ENCODE measurements at regions of chr6 and their contacts with region 1.

Region 1: GRCh38 chr6:106360410-106360988 is at the start of gene CRYBG1:
- DNase-seq: peak; percentile 77 to 99
- H3K4me3 ChIP-seq: peak within 1 kb of the TSS; percentile 55 to 81 (median 72)
- H3K27ac ChIP-seq: no peak within 1 kb of the TSS
- H3K4me1 ChIP-seq: peaks cover 0 to 2% (median 0%) of the 10 kb centered on the region in 4 experiments; a peak in 1 of 7 replicates
- H3K27me3 ChIP-seq: peaks cover 0 to 10% (median 7%) of the 10 kb centered on the region in 4 experiments; a peak in 5 of 7 replicates
- CTCF ChIP-seq: peak; percentile 71 to 98 (median 94)
- EP300 ChIP-seq: peak in 1 of 2 experiments; percentile 80; a peak in 2 of 3 replicates
- POLR2A ChIP-seq: peak in 1 of 2 experiments; percentile 33; a peak in 2 of 3 replicates
- RAD21 ChIP-seq: peak; percentile 56 to 74
- total RNA-seq, gene CRYBG1: 11.6 and 11.9 TPM in 2 replicates

Region 2: DNA sequence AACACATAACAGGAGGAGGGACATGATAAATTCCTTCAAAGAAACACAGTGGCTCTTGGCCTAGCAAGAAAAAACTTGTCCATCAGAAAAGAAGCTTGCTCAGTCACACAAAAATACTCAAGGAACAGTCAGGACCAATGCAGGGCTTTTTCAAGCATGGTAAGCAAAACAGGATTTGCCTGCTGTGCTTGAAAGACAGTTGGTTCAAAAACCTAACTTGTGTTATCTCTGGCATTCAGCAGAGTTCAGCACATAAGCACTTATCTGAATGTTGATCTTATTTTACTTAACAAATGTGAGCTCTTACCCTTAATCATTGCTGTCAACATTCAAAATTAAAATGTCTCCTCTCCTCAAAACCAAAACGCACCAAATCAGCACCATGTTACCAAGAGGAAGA is 73.3 kb before region 1 on chr6:
- CTCF ChIA-PET with region 1: no interaction called
- POLR2A ChIA-PET with region 1: no interaction called
- DNase-seq: no peak
- H3K4me3 ChIP-seq: no peak overlapping the region
- H3K27ac ChIP-seq: no peak overlapping the region
- H3K4me1 ChIP-seq: no peaks in the 10 kb centered on the region; a peak in 1 of 7 replicates
- H3K27me3 ChIP-seq: no peaks in the 10 kb centered on the region
- CTCF ChIP-seq: no peak
- EP300 ChIP-seq: no peak
- POLR2A ChIP-seq: no peak
- RAD21 ChIP-seq: no peak

Region 3: DNA sequence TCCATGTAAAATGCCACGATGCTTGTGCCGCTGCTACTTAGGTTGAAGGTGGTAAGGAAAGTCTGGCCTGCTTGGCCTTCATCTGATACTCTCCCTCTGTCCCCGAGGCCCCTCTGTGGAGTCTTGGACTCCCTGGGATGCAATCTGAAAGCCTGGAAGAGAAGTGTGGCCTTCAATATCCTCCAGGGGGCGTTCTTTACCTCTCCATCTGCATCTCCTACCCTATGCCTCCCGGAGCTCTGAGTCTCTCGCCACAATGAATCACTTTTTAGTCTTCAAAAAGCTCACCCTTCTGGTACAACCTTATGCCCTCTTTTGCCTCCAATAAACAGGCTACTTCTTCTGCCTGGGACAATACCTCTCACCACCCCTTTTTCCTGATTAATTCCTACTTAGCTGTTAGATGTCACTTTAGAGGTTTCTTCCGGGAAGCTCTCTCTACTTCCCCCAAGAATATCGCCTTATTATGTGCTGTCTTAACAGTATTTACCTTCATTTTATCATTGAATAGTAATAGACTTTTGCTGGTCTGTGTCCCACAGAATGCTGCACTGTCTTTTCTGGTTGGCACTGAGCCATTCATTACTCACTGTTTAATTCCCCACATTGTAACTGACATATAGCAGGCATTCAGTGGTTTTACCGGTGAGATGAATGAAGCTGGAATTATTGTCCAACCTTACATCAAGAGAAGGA is 21.0 kb before region 1 on chr6:
- CTCF ChIA-PET with region 1: interaction called, 24 read pairs
- POLR2A ChIA-PET with region 1: no interaction called
- DNase-seq: peak; percentile 31 to 72
- H3K4me3 ChIP-seq: no peak overlapping the region
- H3K27ac ChIP-seq: no peak overlapping the region
- H3K4me1 ChIP-seq: no peaks in the 10 kb centered on the region
- H3K27me3 ChIP-seq: no peaks in the 10 kb centered on the region
- CTCF ChIP-seq: peak; percentile 55 to 81 (median 76)
- EP300 ChIP-seq: no peak
- POLR2A ChIP-seq: no peak
- RAD21 ChIP-seq: peak; percentile 82 to 85

Region 4: DNA sequence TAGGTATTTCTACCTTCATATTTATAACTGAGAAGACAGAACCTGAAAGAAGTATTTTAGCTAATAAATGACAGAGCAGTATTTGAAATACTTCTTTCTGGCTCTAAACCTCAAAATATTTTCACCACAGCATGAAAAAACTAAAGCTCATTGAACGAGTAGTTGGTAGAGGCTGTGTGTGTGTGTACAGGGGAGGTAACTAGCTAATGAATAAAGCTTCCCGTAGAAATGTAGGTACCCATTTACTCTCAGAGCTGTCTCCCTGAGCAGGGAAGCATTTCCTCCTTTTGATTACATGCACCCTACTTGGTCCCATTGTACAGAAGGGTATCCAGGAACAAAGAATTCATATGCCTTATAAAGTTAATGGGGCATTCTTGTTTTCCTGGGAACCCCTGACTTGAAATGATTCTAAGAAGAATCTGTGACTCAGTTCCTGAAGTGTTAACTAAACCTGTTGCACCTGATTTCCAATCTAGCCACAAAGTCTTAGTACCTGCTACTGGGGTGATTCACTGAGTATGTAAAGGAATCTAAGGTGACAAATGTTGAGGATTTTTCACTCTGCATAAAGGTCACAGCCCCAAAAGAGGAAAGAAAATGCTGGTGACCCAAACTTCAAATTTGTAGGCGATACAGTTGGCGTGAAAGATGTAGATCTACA is 12.5 kb after region 1 on chr6:
- CTCF ChIA-PET with region 1: interaction called, 24 read pairs
- POLR2A ChIA-PET with region 1: interaction called, 5 read pairs
- DNase-seq: no peak
- H3K4me3 ChIP-seq: no peak overlapping the region
- H3K27ac ChIP-seq: no peak overlapping the region
- H3K4me1 ChIP-seq: peaks cover 0 to 4% (median 0%) of the 10 kb centered on the region in 4 experiments; a peak in 2 of 7 replicates
- H3K27me3 ChIP-seq: no peaks in the 10 kb centered on the region
- CTCF ChIP-seq: no peak
- EP300 ChIP-seq: no peak
- POLR2A ChIP-seq: no peak
- RAD21 ChIP-seq: no peak

Region 5: GRCh38 chr6:106563614-106564013 is 203.1 kb after region 1 on chr6:
- CTCF ChIA-PET with region 1: interaction called, 12 read pairs
- POLR2A ChIA-PET with region 1: no interaction called
- DNase-seq: no peak
- H3K4me3 ChIP-seq: no peak overlapping the region
- H3K27ac ChIP-seq: no peak overlapping the region
- H3K4me1 ChIP-seq: peaks cover 0 to 10% (median 5%) of the 10 kb centered on the region in 4 experiments; a peak in 3 of 7 replicates
- H3K27me3 ChIP-seq: no peaks in the 10 kb centered on the region
- CTCF ChIP-seq: no peak
- EP300 ChIP-seq: no peak
- POLR2A ChIP-seq: no peak
- RAD21 ChIP-seq: no peak

Measured in H1 (cell line).